Activated naive CD4-positive, alpha-beta T cell treated with anti-CD3 and anti-CD28 coated beads, Interleukin-2, amount 10 ng/mL, durations not matched to agents 7 days and 5 days (primary cell): ENCODE measurements at regions of chr9 and their contacts with region 1.

Region 1: GRCh38 chr9:22008736-22009562 is at the start of gene CDKN2B:
- DNase-seq: peak; percentile 70
- H3K4me3 Mint-ChIP-seq: peak within 1 kb of the TSS; percentile 78
- H3K27ac Mint-ChIP-seq: peak within 1 kb of the TSS; percentile 56
- H3K4me1 Mint-ChIP-seq: peaks cover 32% of the 10 kb centered on the region
- H3K27me3 Mint-ChIP-seq: peaks cover 62% of the 10 kb centered on the region

Region 2: GRCh38 chr9:21709464-21710058 is 299.4 kb before region 1 on chr9:
- CTCF ChIA-PET with region 1: no interaction called
- DNase-seq: peak; percentile 76
- H3K4me3 Mint-ChIP-seq: no peak overlapping the region
- H3K27ac Mint-ChIP-seq: no peak overlapping the region
- H3K4me1 Mint-ChIP-seq: peaks cover 4% of the 10 kb centered on the region
- H3K27me3 Mint-ChIP-seq: peaks cover 13% of the 10 kb centered on the region

Region 3: DNA sequence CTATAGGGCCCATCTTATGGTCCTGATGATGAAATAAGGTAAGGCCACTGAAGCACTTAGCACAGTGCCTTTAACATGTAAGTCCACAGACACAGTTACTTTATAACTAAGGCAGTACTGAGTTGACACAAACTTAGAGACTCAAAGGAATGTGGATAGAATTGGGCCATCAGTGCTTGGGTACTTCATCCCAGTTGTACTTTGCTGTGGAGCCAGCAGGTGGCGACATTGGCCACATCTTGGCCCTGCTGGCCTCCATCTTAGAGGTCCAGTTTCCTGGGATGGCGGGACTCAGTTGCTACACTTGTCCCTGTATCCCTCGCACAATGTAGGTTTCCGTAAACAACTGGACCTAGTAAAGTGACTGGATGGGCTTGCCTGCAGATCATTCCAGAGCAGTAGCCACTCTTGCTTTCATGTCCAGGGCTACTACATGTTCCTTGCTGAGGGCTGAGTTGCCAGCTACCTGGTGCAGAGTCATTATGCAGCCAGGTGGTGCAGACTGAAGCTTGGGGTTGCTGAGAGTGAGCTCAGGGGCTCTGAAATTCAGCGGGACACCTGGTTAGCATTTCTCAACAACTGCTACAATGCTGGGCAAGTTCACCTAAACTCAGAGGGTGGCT is 195.9 kb before region 1 on chr9:
- CTCF ChIA-PET with region 1: interaction called, 59 read pairs
- DNase-seq: peak; percentile 74
- H3K4me3 Mint-ChIP-seq: no peak overlapping the region
- H3K27ac Mint-ChIP-seq: peak overlapping the region; percentile 44
- H3K4me1 Mint-ChIP-seq: peaks cover 16% of the 10 kb centered on the region
- H3K27me3 Mint-ChIP-seq: no peaks in the 10 kb centered on the region

Region 4: DNA sequence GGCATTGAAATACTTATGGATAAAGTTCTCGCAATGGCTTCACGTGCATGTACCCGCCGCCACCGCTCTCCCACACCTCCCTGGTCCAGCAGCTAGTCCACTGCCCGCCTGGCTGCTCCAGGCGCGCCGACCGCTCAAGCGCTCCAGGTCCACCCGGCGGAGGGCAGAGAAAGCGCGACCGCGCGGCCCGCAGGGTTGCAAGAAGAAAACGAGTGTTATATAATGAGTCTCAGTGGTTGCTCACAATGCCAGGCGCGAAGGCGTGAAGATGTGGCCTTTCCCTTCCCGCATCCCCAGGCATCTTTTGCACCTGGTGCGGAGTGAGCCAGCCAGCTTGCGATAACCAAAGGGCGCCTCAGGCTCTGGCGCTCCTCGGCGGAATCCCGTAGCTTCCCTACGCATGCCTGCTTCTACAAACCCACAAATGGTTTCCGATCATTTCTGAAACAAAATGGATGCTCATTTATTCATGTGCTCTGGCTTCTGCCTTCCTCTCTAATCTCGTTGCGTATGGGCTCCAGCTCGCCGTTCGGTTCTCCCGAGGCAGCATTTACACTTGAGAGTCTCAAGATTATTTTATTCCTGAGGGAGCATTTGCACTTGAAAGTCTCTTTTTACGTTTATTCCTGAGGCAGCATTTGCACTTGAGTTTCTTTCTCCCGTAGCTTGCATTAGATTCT is 40.5 kb before region 1 on chr9:
- CTCF ChIA-PET with region 1: interaction called, 20 read pairs
- DNase-seq: no peak
- H3K4me3 Mint-ChIP-seq: peak overlapping the region; percentile 37
- H3K27ac Mint-ChIP-seq: peak overlapping the region; percentile 78
- H3K4me1 Mint-ChIP-seq: peaks cover 57% of the 10 kb centered on the region
- H3K27me3 Mint-ChIP-seq: peaks cover 99% of the 10 kb centered on the region

Region 5: GRCh38 chr9:21989440-21990189 is 19.3 kb before region 1 on chr9:
- CTCF ChIA-PET with region 1: interaction called, 21 read pairs
- DNase-seq: no peak
- H3K4me3 Mint-ChIP-seq: no peak overlapping the region
- H3K27ac Mint-ChIP-seq: peak overlapping the region; percentile 49
- H3K4me1 Mint-ChIP-seq: peaks cover 50% of the 10 kb centered on the region
- H3K27me3 Mint-ChIP-seq: peaks cover 49% of the 10 kb centered on the region

Region 6: DNA sequence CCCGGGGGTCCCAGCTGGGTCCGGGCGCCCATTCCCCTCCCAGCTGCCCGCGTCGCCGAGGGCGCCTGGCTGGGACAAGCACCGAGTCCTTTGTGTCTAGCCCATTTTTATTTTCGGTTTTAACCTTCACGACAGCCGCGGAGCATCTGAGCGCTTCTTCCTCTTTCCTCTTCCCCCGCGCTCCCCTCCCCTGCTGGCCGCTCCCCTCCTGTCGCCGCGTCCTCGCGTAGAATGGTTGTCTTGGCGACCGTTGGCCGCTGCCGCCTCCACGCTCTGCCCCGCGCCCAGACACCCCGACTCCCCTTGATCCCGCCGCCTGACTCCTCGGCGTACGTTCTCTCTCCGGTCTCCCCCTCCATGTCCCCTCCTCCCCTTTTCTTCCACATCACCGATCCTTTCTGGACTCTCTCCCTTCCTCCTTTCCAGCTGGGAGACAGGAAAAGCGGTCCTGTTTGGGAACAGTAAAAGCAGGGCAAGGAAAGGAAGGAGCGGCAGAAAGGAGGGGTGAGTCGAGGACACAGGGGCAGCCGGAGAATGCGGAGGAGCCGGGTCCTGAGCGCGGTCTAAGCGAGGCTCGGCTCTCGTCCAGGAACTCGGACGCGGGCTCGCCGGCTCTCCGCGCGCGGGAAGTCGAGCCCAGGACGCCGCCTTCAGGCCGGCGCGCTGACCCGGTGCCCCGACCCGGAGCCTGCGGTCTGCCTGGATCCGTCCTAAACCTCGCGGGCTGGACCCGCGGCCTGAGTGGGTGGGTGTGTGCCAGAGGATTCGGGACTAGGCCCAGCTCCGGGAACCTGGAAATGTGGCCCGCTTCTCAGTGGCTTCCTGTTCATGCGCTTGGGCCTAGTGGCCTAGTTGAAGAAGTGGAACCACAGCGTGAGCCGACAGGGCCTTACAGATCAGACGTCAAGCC is 13.5 kb before region 1 on chr9:
- CTCF ChIA-PET with region 1: interaction called, 21 read pairs
- DNase-seq: peak; percentile 94
- H3K4me3 Mint-ChIP-seq: peak overlapping the region; percentile 98
- H3K27ac Mint-ChIP-seq: peak overlapping the region; percentile 100
- H3K4me1 Mint-ChIP-seq: peaks cover 39% of the 10 kb centered on the region
- H3K27me3 Mint-ChIP-seq: peaks cover 58% of the 10 kb centered on the region

Region 7: GRCh38 chr9:22037954-22038690 is 29.2 kb after region 1 on chr9:
- CTCF ChIA-PET with region 1: interaction called, 18 read pairs
- DNase-seq: no peak
- H3K4me3 Mint-ChIP-seq: no peak overlapping the region
- H3K27ac Mint-ChIP-seq: no peak overlapping the region
- H3K4me1 Mint-ChIP-seq: peaks cover 62% of the 10 kb centered on the region
- H3K27me3 Mint-ChIP-seq: peaks cover 20% of the 10 kb centered on the region

Region 8: GRCh38 chr9:22147813-22148524 is 139.0 kb after region 1 on chr9:
- CTCF ChIA-PET with region 1: no interaction called
- DNase-seq: peak; percentile 36
- H3K4me3 Mint-ChIP-seq: no peak overlapping the region
- H3K27ac Mint-ChIP-seq: peak overlapping the region; percentile 3
- H3K4me1 Mint-ChIP-seq: peaks cover 25% of the 10 kb centered on the region
- H3K27me3 Mint-ChIP-seq: peaks cover 29% of the 10 kb centered on the region